Cardiac septum (tissue), 1 donor: ENCODE measurements at regions of chr14 and their contacts with region 1.

Region 1: GRCh38 chr14:69580009-69580577 is 5.4 kb upstream of the CCDC177 start:
- DNase-seq: no peak

Region 2: GRCh38 chr14:69726761-69727511 is 146.8 kb after region 1 on chr14:
- intact Hi-C with region 1: loop called (anchors 1 kb)
- DNase-seq: peak; percentile 94

Region 3: GRCh38 chr14:70027785-70028428 is 447.8 kb after region 1 on chr14:
- intact Hi-C with region 1: loop called (anchors 10 kb)
- DNase-seq: peak; percentile 83